ENCODE measurements at regions of chr12 and their contacts with region 1.

Region 1: DNA sequence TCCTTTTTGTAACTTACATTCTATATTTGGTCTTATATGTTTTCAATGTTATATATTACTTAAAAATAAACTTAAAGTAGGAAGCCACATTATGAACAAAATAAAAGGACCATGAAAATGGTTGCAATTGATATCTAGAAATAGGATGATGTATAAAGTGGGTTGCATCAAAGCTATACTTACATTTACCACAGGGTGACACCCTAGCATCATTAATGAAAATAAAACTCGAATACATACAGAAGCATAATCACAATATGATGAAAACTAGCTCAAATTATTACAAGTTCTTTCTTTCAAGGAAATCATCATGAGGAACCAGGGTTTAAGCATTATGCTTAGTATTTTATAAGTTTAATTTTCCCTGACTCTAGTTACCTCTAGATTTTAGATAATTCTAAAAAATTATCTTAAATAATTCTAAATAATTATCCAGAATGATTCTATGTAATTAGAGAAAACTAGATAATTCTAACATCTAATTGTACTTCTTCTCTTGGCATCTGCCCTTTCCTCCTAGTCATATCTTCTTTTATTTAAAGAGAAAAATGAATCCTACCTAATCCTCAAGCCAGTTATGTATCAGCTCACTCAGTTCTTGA is 31.2 kb downstream of the TAS2R7 start:
- DNase-seq: no peak
- H3K4me3 ChIP-seq: no peak overlapping the region
- H3K27ac ChIP-seq: no peak overlapping the region
- H3K4me1 ChIP-seq: no peaks in the 10 kb centered on the region
- H3K27me3 ChIP-seq: peaks cover 16% of the 10 kb centered on the region
- CTCF ChIP-seq: peak; percentile 55 to 95 (median 82)
- POLR2A ChIP-seq: no peak

Region 2: DNA sequence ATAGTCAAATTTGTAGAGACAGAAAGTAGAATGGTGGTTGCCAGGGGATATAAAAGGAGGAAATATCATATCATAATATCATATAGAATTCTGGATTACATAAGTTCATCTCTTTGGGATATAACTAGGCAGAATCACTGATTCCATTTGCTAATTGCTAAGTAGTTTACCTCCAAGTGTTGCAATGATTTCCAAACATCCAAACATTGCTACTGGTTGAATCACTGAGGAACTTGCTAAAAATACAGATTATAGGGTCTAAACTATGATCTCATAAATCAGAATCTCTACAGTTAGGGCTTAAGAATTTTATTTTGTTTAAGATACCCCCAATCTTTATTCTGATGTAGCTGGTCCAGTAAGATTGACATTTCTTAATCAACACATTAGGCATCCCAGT is 431.6 kb after region 1 on chr12:
- intact Hi-C with region 1: loop called in 1 of 2 experiments (anchors 5 kb)
- DNase-seq: no peak
- H3K4me3 ChIP-seq: no peak overlapping the region
- H3K27ac ChIP-seq: no peak overlapping the region
- H3K4me1 ChIP-seq: peaks cover 0 to 7% of the 10 kb centered on the region in 2 donors
- H3K27me3 ChIP-seq: no peaks in the 10 kb centered on the region
- CTCF ChIP-seq: no peak
- POLR2A ChIP-seq: no peak

Region 3: DNA sequence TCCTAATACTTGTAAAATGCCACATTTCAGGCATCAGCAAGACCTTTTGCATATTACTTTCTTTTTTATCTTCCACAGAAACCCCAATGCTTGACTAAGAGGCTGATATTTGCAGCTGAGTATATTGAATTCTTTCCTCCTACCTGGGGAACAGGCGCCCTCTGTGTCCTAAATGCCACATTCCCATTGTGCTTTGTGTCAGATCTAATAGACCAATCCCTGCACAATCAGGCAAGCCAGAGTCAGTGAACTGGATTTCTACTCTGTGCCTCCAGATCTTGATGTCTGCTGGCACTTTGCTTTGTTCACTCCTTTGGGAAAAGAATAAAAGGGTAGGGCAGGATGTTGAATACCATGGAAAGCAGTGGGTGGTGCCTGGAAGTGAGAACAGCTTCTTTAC is 437.9 kb after region 1 on chr12:
- intact Hi-C with region 1: loop called in 1 of 2 experiments (anchors 10 kb)
- DNase-seq: no peak
- H3K4me3 ChIP-seq: no peak overlapping the region
- H3K27ac ChIP-seq: no peak overlapping the region
- H3K4me1 ChIP-seq: peaks cover 0 to 7% of the 10 kb centered on the region in 2 donors
- H3K27me3 ChIP-seq: no peaks in the 10 kb centered on the region
- CTCF ChIP-seq: no peak
- POLR2A ChIP-seq: no peak

Region 4: DNA sequence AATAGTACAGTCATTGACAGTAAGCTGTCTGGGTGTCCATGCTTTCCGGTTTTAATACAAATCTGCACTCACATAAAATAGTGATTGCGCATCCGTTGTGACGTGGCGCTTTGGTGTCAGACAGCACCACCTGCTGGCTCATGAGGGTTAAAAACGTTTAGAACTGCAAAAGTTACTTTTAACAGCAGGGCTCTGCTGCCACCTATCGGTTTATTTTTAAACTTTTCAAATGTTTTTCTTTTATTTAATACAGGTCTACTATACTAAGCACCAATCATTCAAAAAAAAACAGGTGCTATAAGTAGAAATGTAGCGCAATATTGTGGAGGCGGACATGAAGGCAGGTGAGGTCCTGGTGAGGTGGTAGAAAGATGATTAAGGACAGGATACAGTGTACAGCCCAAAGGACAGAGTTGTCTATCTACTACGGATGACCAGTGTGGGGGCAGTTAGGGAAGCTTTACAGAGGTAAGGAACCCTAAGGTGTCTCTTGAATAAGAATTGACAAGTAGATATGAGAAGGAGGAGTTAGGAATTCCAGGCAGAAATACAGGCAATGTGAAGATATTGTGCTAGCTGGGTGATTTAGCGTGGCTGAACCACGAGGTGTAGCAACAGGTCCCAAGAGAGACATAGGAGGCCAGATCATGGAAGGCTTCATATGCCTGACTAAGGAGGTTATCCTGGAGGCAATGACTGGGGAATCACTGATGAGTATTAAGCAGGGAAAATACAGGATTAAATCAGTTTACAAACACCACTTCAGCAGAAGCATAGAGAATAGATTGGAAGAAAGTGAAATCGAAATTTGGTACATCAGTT is 715.6 kb after region 1 on chr12:
- intact Hi-C with region 1: loop called (anchors 5 kb)
- DNase-seq: peak; percentile 83 to 95 (median 88)
- H3K4me3 ChIP-seq: no peak overlapping the region
- H3K27ac ChIP-seq: no peak overlapping the region
- H3K4me1 ChIP-seq: peaks cover 4 to 9% of the 10 kb centered on the region in 2 donors
- H3K27me3 ChIP-seq: no peaks in the 10 kb centered on the region
- CTCF ChIP-seq: peak; percentile 92 to 99 (median 99)
- POLR2A ChIP-seq: no peak